ENCODE measurements at regions of chr17 and their contacts with region 1.

Region 1: GRCh38 chr17:54172096-54172984 is 349.6 kb downstream of the KIF2B start:
- DNase-seq: no peak
- ATAC-seq: no peak
- H3K4me3 ChIP-seq: no peak overlapping the region
- H3K27ac ChIP-seq: no peak overlapping the region
- H3K4me1 ChIP-seq: no peaks in the 10 kb centered on the region
- H3K27me3 ChIP-seq: no peaks in the 10 kb centered on the region
- CTCF ChIP-seq: peak in 8 of 9 donors; percentile 13 to 61 (median 32)

Region 2: DNA sequence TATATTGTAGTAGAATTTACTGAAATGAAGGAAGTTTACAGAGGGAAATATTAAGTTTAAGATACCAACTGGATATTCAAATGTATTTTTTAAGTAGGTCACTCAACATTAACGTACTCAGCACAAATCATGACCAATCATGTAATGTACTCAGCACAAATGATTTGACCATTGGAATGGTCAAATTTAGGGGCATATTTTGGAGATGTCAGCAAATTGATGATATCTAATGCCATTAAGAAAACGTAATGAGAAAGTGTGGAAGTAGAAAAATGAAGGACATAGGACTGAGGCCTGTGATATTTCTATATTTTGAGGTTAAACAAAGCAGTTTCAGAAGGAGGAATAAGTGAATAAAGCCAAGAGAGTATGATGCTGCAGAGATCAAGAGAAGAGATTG is 14.8 kb before region 1 on chr17:
- intact Hi-C with region 1: loop called in 1 of 10 experiments (anchors 1 kb)
- DNase-seq: no peak
- ATAC-seq: no peak
- H3K4me3 ChIP-seq: no peak overlapping the region
- H3K27ac ChIP-seq: no peak overlapping the region
- H3K4me1 ChIP-seq: no peaks in the 10 kb centered on the region
- H3K27me3 ChIP-seq: no peaks in the 10 kb centered on the region
- CTCF ChIP-seq: no peak

Region 3: GRCh38 chr17:54418467-54418866 is 246.1 kb after region 1 on chr17:
- intact Hi-C with region 1: no loop called
- DNase-seq: no peak
- ATAC-seq: no peak
- H3K4me3 ChIP-seq: no peak overlapping the region
- H3K27ac ChIP-seq: no peak overlapping the region
- H3K4me1 ChIP-seq: no peaks in the 10 kb centered on the region
- H3K27me3 ChIP-seq: no peaks in the 10 kb centered on the region
- CTCF ChIP-seq: no peak

Measured in heart right ventricle (tissue), 16 donors.